Left ventricle myocardium inferior (tissue), 1 donor: ENCODE measurements at regions of chr4 and their contacts with region 1.

Region 1: GRCh38 chr4:85369701-85370380 is 105.1 kb upstream of the ARHGAP24 start:
- DNase-seq: no peak
- H3K4me3 ChIP-seq: no peak overlapping the region
- H3K27ac ChIP-seq: no peak overlapping the region
- H3K4me1 ChIP-seq: peaks cover 24% of the 10 kb centered on the region
- H3K27me3 ChIP-seq: no peaks in the 10 kb centered on the region
- CTCF ChIP-seq: no peak

Region 2: DNA sequence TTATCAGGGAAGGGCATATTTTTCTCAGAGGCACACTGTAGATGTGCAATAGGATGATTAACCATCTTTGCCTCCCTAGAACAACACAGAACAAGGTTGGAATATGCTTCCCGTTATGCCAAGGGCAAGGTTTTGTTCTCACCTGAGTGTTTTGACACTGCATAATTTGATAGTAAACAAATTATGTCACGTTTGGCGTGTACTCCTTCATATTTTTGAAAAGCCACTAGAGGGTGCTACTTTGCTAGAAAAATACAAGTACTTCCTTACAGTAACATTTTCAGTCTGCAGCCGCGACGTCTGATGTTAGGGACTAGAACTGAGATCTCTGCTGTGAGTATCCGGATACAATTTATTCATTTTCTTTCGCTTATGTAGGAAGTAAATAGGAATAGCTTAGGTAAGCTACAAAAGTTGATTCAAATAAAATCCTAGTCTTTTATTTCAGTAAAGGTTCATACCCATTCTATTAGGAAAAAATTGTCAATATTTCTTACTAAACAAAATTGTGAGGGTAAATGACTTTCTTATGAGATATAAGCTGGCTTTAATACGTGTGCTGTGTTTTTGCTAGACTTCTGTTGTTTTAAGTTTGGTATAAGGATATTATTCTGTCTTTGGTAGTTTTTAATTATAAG is 222.3 kb before region 1 on chr4:
- intact Hi-C with region 1: loop called (anchors 10 kb)
- DNase-seq: peak; percentile 38
- H3K4me3 ChIP-seq: peak overlapping the region; percentile 42
- H3K27ac ChIP-seq: peak overlapping the region; percentile 42
- H3K4me1 ChIP-seq: peaks cover 15% of the 10 kb centered on the region
- H3K27me3 ChIP-seq: no peaks in the 10 kb centered on the region
- CTCF ChIP-seq: peak; percentile 76

Region 3: DNA sequence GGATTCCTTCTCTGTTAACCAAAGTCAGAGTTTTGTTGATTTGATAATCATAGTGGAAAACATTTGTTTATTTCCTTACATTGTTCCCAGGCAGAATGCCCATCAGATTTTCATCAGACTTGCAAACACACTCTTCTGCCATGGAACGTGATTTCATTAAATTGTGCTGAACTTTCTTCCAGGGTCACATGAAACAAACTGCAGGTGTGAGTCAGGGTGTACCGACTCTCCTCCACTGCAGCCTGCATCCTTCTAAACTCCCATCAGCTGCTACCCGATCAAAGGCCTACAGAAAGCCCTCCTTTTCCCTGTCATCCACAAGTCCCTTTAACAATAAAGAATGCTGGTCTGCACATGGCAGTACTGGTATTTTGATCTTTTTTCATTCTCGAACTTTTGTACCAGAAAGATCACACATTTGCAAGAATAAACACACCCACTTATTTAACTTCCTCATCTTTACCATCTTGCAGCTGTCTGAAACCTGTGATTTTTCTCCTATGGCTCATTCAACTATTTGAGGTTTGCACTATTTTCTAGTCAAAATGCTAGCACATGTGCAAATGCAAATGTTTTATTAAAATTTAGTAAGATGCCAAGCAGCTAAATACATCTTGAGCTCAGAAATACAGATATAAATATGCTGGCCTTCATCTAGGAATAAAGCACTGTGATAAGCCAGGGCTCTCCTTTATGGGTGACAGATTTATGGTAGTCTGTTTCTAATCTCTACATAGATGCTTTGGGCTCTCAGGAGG is 79.2 kb after region 1 on chr4:
- intact Hi-C with region 1: no loop called
- DNase-seq: no peak
- H3K4me3 ChIP-seq: no peak overlapping the region
- H3K27ac ChIP-seq: no peak overlapping the region
- H3K4me1 ChIP-seq: peaks cover 4% of the 10 kb centered on the region
- H3K27me3 ChIP-seq: no peaks in the 10 kb centered on the region
- CTCF ChIP-seq: no peak

Region 4: GRCh38 chr4:85587952-85588351 is 218.1 kb after region 1 on chr4:
- intact Hi-C with region 1: no loop called
- DNase-seq: no peak
- H3K4me3 ChIP-seq: no peak overlapping the region
- H3K27ac ChIP-seq: no peak overlapping the region
- H3K4me1 ChIP-seq: no peaks in the 10 kb centered on the region
- H3K27me3 ChIP-seq: no peaks in the 10 kb centered on the region
- CTCF ChIP-seq: no peak